ENCODE measurements at regions of chr22 and their contacts with region 1.

Region 1: GRCh38 chr22:35684270-35684700 is 33.4 kb upstream of the APOL5 start:
- DNase-seq: peak; percentile 39
- ATAC-seq: peak; percentile 63
- H3K4me3 Mint-ChIP-seq: no peak overlapping the region
- H3K27ac Mint-ChIP-seq: no peak overlapping the region
- H3K4me1 Mint-ChIP-seq: no peaks in the 10 kb centered on the region
- H3K27me3 Mint-ChIP-seq: peaks cover 3% of the 10 kb centered on the region; the same call in 1 of the 2 replicates
- CTCF ChIP-seq: no peak

Region 2: DNA sequence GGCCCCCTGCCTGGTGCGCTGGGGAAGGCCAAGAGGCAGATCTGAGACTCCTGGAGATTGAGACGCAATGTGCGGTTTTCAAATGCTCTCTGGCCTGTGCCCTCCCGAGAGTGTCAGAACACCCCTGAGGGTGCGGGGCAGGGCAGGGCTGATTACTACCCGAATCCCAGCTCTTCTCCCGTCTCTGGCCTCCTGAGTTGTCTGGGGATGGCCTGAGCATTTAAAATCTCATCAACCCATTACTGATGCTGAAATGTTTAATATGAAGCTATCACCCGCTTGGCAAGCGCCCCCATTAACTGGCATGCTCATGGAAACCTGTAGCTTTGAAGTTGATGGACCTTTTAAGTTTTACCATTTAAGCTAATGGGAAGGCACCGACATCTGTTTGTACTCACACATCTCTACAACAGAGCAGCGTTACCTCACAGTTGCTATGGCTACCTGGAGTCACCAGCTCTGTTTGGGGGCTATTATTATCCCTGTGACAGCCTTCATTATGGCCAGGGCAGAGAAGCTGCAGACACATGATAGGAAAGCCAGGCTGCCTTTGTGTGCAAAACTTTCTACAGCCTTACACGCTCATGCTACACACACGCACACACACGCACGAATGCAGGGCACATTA is 63.5 kb before region 1 on chr22:
- CTCF ChIA-PET with region 1: no interaction called
- POLR2A ChIA-PET with region 1: no interaction called
- DNase-seq: no peak
- ATAC-seq: no peak
- H3K4me3 Mint-ChIP-seq: no peak overlapping the region
- H3K27ac Mint-ChIP-seq: no peak overlapping the region
- H3K4me1 Mint-ChIP-seq: peaks cover 16% of the 10 kb centered on the region
- H3K27me3 Mint-ChIP-seq: no peaks in the 10 kb centered on the region
- CTCF ChIP-seq: no peak

Region 3: DNA sequence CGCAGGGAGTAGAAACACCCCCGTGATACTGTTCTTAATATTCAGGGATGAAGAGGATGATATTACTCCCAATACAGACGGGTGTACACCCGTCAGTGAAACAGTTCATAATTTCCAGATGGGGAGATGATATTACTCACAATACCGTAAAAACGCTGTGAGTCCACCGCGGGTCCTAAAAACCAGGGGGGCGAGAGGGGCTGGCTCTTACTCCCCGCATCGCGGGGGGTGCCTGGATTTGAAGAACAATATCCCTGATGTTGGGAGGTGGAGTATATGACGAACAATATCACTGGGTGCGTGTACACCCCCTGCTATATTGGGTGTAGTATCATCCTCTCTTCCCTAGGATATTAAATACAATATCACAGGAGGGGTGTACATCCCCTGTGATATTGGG is 12.9 kb after region 1 on chr22:
- CTCF ChIA-PET with region 1: no interaction called
- POLR2A ChIA-PET with region 1: no interaction called
- DNase-seq: no peak
- ATAC-seq: no peak
- H3K4me3 Mint-ChIP-seq: no peak overlapping the region
- H3K27ac Mint-ChIP-seq: no peak overlapping the region
- H3K4me1 Mint-ChIP-seq: no peaks in the 10 kb centered on the region
- H3K27me3 Mint-ChIP-seq: no peaks in the 10 kb centered on the region; the same call in 1 of the 2 replicates
- CTCF ChIP-seq: no peak

Region 4: DNA sequence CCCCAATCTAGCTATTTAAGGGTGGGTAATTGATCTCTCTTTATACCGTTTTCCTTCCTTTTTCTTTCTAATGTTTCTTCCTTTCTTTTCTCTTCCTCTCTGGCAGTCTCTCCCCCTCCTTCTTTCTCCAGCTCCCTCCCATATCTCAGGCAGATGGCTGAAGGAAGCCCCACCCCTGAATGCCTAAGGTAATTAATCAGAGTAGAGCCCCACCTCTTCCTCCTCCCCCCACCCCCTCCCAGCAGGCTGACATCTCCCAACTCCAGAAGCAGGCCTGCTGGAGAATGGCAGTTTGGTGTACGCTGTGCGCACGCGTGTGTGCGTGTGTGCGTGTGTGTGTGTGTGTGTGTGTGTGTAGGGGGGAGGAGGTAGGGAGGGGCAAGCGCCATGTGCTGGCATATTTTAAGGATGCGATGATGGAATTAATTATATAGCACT is 156.0 kb after region 1 on chr22:
- CTCF ChIA-PET with region 1: interaction called, 11 read pairs
- POLR2A ChIA-PET with region 1: no interaction called
- DNase-seq: peak; percentile 78
- ATAC-seq: peak; percentile 91
- H3K4me3 Mint-ChIP-seq: peak overlapping the region; percentile 91
- H3K27ac Mint-ChIP-seq: peak overlapping the region; percentile 95
- H3K4me1 Mint-ChIP-seq: peaks cover 64% of the 10 kb centered on the region
- H3K27me3 Mint-ChIP-seq: no peaks in the 10 kb centered on the region
- CTCF ChIP-seq: no peak

Region 5: GRCh38 chr22:36123673-36124630 is 439.7 kb after region 1 on chr22:
- CTCF ChIA-PET with region 1: interaction called, 12 read pairs
- POLR2A ChIA-PET with region 1: no interaction called
- DNase-seq: peak; percentile 95
- ATAC-seq: peak; percentile 95
- H3K4me3 Mint-ChIP-seq: peak overlapping the region; percentile 39; the same call in 1 of the 2 replicates
- H3K27ac Mint-ChIP-seq: peak overlapping the region; percentile 91
- H3K4me1 Mint-ChIP-seq: peaks cover 15% of the 10 kb centered on the region
- H3K27me3 Mint-ChIP-seq: peaks cover 20% of the 10 kb centered on the region
- CTCF ChIP-seq: peak; percentile 93